ENCODE measurements at regions of chr14 and their contacts with region 1.

Region 1: DNA sequence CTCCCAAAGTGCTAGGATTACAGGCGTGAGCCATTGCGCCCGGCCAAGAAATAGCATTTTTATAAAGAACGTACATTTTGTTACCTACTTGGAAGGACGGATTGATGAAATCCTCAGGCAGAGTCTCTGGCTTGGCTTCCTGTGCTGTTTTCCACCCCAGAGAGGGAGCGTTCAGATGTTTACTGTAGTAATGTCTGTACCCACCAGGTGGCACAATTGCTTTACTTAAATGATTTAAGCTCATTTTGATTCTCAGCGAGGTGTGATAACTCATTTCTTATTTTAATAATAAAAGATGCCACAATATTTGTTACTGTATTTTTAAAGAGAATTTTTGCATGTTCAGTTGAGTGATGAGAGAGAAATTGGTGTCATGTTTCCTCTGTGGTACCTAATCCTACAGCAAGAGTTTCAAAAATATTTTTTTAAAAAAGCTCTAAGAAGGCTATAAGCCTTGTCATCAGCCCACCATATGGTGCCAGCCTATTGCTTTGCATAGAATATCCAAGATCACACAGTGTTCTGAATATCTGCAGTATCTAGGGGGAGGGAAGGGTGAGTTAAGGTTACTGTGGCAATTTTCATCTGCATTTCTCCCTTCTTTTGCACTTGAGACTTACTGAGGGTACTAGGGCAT is 82.6 kb upstream of the TRAF3 start:
- DNase-seq: peak; percentile 78
- H3K4me3 Mint-ChIP-seq: no peak overlapping the region
- H3K27ac Mint-ChIP-seq: no peak overlapping the region
- H3K4me1 Mint-ChIP-seq: peaks cover 19% of the 10 kb centered on the region
- H3K27me3 Mint-ChIP-seq: no peaks in the 10 kb centered on the region

Region 2: GRCh38 chr14:101506926-101507835 is 1187.5 kb before region 1 on chr14:
- CTCF ChIA-PET with region 1: no interaction called
- intact Hi-C with region 1: no loop called
- DNase-seq: peak; percentile 1
- H3K4me3 Mint-ChIP-seq: no peak overlapping the region
- H3K27ac Mint-ChIP-seq: no peak overlapping the region
- H3K4me1 Mint-ChIP-seq: no peaks in the 10 kb centered on the region
- H3K27me3 Mint-ChIP-seq: no peaks in the 10 kb centered on the region

Region 3: DNA sequence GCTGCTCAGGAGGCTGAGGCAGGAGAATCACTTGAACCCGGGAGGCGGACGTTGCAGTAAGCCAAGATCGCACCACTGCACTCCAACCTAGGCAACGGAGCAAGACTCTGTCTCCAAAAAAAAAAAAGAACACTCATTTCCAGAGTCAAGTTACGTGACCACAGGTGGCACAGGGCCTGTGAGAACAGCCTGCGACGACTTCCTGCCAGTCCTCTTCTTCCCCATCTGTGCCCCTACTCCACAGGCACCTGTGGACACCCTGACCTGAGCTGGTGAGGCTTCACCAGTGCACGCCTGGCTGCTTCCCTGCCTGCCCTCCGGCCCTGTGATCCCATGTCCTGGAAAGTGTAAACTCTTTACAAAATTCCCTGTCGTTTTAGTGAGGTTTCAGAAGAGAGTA is 855.4 kb before region 1 on chr14:
- CTCF ChIA-PET with region 1: no interaction called
- intact Hi-C with region 1: no loop called
- DNase-seq: peak; percentile 73
- H3K4me3 Mint-ChIP-seq: peak overlapping the region; percentile 39
- H3K27ac Mint-ChIP-seq: peak overlapping the region; percentile 77
- H3K4me1 Mint-ChIP-seq: peaks cover 86% of the 10 kb centered on the region
- H3K27me3 Mint-ChIP-seq: no peaks in the 10 kb centered on the region

Region 4: DNA sequence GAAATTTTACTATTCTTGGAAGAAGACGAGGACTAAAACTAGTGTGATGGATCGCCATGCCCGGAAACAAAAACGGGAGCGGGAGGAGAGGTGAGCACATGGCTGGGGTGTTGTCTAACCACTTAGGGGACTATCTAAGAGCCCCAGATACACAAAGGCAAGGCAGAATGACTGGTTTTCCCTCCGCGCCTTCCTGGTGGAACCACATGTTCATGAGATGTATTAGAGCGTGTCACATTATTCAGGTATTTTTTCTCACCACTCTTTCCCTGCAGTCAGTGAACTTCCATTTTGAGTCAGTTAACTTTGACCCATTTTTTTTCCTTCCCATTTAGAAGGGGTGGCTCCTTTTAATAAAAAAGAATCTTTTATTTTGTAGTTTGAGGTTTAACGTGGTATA is 13.8 kb after region 1 on chr14:
- CTCF ChIA-PET with region 1: interaction called, 12 read pairs
- intact Hi-C with region 1: no loop called
- DNase-seq: no peak
- H3K4me3 Mint-ChIP-seq: no peak overlapping the region
- H3K27ac Mint-ChIP-seq: no peak overlapping the region
- H3K4me1 Mint-ChIP-seq: no peaks in the 10 kb centered on the region
- H3K27me3 Mint-ChIP-seq: no peaks in the 10 kb centered on the region

Region 5: DNA sequence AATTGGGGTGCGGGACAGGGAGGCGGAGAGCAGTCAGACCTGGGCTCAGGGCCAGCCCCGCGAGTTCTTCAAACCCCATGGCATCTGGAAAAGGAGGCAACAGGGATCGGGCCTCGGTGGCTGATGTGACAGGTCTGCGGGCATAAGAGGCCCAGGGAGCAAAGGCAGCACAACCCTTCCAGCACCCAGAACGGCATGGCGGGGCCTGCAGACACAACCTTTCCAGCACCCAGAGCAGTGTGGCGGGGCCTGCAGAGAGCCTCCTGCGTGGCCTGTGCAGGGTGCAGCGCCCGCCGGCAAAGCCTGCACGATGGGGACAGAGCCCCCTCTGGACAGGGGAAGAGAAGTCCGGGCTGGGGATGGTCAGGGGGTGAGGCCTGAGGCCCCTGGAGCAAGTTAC is 56.4 kb after region 1 on chr14:
- CTCF ChIA-PET with region 1: no interaction called
- intact Hi-C with region 1: no loop called
- DNase-seq: no peak
- H3K4me3 Mint-ChIP-seq: no peak overlapping the region
- H3K27ac Mint-ChIP-seq: no peak overlapping the region
- H3K4me1 Mint-ChIP-seq: no peaks in the 10 kb centered on the region
- H3K27me3 Mint-ChIP-seq: no peaks in the 10 kb centered on the region

Region 6: GRCh38 chr14:102917469-102918211 is 223.0 kb after region 1 on chr14:
- CTCF ChIA-PET with region 1: interaction called, 7 read pairs
- intact Hi-C with region 1: loop called (anchors 1 kb)
- DNase-seq: peak; percentile 80
- H3K4me3 Mint-ChIP-seq: no peak overlapping the region
- H3K27ac Mint-ChIP-seq: no peak overlapping the region
- H3K4me1 Mint-ChIP-seq: no peaks in the 10 kb centered on the region
- H3K27me3 Mint-ChIP-seq: no peaks in the 10 kb centered on the region

Region 7: GRCh38 chr14:102975662-102976061 is 281.0 kb after region 1 on chr14:
- CTCF ChIA-PET with region 1: interaction called, 10 read pairs
- intact Hi-C with region 1: no loop called
- DNase-seq: no peak
- H3K4me3 Mint-ChIP-seq: no peak overlapping the region
- H3K27ac Mint-ChIP-seq: no peak overlapping the region
- H3K4me1 Mint-ChIP-seq: no peaks in the 10 kb centered on the region
- H3K27me3 Mint-ChIP-seq: no peaks in the 10 kb centered on the region

Measured in activated naive CD4-positive, alpha-beta T cell treated with anti-CD3 and anti-CD28 coated beads for 36 hours (primary cell).